Naive thymus-derived CD4-positive, alpha-beta T cell (primary cell): ENCODE measurements at regions of chr18 and their contacts with region 1.

Region 1: DNA sequence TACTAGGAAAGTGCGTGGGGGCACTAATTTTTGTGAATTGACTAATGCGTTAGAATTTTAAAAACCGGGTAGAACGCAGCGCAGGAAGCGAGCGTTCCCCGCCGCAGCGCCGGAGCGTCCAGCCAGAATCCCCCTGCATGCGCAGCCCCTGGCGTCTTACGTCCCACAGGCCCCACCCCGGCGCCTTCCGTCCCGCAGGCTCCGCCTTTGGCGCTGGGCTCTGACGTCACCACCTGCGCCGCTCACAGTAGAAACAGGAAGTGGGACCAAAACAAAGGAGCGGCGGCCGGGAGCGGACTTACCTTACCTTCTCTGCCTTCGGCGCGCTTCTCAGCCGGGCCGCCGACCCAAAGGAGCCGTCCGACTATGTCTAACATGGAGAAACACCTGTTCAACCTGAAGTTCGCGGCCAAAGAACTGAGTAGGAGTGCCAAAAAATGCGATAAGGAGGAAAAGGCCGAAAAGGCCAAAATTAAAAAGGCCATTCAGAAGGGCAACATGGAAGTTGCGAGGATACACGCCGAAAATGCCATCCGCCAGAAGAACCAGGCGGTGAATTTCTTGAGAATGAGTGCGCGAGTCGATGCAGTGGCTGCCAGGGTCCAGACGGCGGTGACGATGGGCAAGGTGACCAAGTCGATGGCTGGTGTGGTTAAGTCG is at the start of gene CHMP1B:
- DNase-seq: peak; percentile 95 to 97 (median 97)
- ATAC-seq: peak; percentile 91
- H3K4me3 ChIP-seq: peak within 1 kb of the TSS; percentile 88
- H3K4me3 Mint-ChIP-seq: peak within 1 kb of the TSS; percentile 89 to 100 (median 100)
- H3K27ac ChIP-seq: peak within 1 kb of the TSS; percentile 96
- H3K27ac Mint-ChIP-seq: peak within 1 kb of the TSS; percentile 97 to 100 (median 100)
- H3K4me1 ChIP-seq: peaks cover 19 to 21% of the 10 kb centered on the region in 2 donors
- H3K4me1 Mint-ChIP-seq: peaks cover 16 to 62% (median 50%) of the 10 kb centered on the region in 7 donors
- H3K27me3 ChIP-seq: no peaks in the 10 kb centered on the region
- H3K27me3 Mint-ChIP-seq: peaks cover 0 to 13% (median 0%) of the 10 kb centered on the region in 5 donors
- total RNA-seq, gene CHMP1B: 27.2 to 115 (median 56.1) TPM

Region 2: DNA sequence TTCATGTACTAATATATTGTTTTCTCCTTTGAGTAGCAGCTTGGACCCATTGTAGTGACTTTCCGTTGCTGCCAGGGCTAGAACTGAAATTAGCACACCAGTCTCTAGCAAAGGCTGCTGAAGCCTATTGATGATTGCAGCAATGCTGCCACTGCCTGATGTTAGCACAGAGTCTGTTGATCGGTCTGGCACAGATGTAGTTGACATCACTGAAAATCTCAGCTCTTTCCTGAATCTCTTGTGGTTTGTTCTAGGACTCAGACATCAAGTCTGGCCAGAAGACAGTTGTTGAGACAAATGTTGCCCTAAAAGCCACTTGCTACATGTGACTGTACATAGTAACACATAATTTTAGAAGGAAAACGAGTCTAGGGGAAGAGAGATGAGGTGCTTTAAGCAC is 1890.2 kb before region 1 on chr18:
- CTCF ChIA-PET with region 1: no interaction called
- POLR2A ChIA-PET with region 1: no interaction called
- intact Hi-C with region 1: no loop called
- DNase-seq: no peak
- ATAC-seq: peak; percentile 34
- H3K4me3 ChIP-seq: no peak overlapping the region
- H3K4me3 Mint-ChIP-seq: peak overlapping the region in 1 of 10 donors; percentile 14
- H3K27ac ChIP-seq: no peak overlapping the region
- H3K27ac Mint-ChIP-seq: peak overlapping the region in 4 of 9 donors; percentile 2 to 67 (median 42)
- H3K4me1 ChIP-seq: no peaks in the 10 kb centered on the region
- H3K4me1 Mint-ChIP-seq: peaks cover 3 to 39% (median 27%) of the 10 kb centered on the region in 7 donors
- H3K27me3 ChIP-seq: no peaks in the 10 kb centered on the region
- H3K27me3 Mint-ChIP-seq: peaks cover 0 to 10% (median 0%) of the 10 kb centered on the region in 5 donors

Region 3: DNA sequence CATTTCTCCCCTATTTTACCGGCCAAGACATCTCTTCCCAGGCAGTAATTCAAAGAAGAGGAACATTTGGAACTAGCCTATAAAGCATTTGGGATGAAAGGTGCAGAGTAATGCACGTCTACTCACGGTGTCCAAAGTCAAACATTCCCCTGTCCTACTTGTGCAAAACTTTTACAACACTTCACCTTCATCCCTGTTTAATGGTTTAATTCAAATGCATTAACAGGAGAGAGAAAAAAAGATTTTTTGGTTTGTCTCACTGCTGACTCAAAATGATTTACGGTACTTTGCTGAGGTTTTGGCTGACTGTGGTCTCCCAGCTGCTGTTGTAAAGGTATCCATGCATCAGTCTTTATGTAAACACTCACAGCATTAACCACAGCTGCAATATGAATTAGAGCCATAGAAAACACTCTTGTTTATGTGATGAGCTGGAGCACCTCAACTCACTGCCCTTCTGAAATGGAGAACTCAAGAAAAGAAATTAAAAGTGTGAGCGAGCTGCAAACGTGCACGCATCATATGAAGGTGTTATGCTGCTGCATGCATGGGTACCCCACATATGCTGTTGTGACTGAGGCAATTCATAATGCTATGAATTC is 922.4 kb before region 1 on chr18:
- CTCF ChIA-PET with region 1: no interaction called
- POLR2A ChIA-PET with region 1: no interaction called
- intact Hi-C with region 1: no loop called
- DNase-seq: no peak
- ATAC-seq: no peak
- H3K4me3 ChIP-seq: no peak overlapping the region
- H3K4me3 Mint-ChIP-seq: no peak overlapping the region
- H3K27ac ChIP-seq: no peak overlapping the region
- H3K27ac Mint-ChIP-seq: no peak overlapping the region
- H3K4me1 ChIP-seq: no peaks in the 10 kb centered on the region
- H3K4me1 Mint-ChIP-seq: no peaks in the 10 kb centered on the region
- H3K27me3 ChIP-seq: no peaks in the 10 kb centered on the region
- H3K27me3 Mint-ChIP-seq: peaks cover 0 to 18% (median 0%) of the 10 kb centered on the region in 5 donors

Region 4: DNA sequence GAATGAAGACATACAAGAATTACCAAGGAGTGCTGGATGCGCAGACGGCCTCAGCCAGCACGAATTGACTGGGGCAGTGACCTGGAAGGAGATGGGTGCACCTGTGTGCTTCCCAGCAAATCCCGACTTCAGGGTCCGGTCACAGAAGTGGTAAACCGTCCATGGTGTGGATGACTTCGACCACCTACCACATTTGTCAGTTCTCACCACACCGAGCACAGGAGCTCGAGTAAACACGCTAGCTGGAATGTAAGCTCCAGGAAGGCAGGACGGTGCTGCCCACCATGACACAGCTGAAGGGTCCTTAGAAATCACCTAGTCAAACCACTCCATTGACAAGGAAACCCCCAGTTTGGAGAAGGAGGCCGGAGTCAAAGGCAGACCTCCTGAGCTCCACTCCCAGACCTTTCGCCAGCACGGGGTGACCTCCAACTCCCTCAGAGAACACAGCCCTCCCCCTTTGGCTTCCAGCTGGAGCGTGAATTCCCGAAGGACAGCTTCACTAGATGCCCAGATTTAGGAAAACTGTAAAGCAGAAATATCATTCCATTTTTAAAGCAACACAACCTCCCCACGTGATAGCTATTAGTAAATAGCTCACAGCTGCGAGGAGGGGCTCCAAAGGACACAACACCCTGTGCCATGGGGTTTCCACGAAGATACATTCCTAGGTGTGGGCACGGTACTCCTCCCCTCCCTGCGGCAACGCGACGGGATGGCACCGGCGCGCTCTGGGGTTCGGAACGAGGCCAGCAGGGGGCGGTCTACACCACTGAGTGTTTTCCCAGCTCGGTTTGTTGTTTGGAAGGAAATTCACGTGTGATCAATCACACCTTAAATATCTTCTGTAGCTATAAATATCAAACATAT is 196.3 kb before region 1 on chr18:
- CTCF ChIA-PET with region 1: no interaction called
- POLR2A ChIA-PET with region 1: no interaction called
- intact Hi-C with region 1: no loop called
- DNase-seq: peak in 4 of 9 donors; percentile 8 to 55 (median 16)
- ATAC-seq: peak; percentile 34
- H3K4me3 ChIP-seq: no peak overlapping the region
- H3K4me3 Mint-ChIP-seq: peak overlapping the region in 2 of 10 donors; percentile 11 to 12
- H3K27ac ChIP-seq: no peak overlapping the region
- H3K27ac Mint-ChIP-seq: no peak overlapping the region
- H3K4me1 ChIP-seq: no peaks in the 10 kb centered on the region
- H3K4me1 Mint-ChIP-seq: peaks cover 0 to 6% (median 0%) of the 10 kb centered on the region in 7 donors
- H3K27me3 ChIP-seq: no peaks in the 10 kb centered on the region
- H3K27me3 Mint-ChIP-seq: peaks cover 33 to 63% (median 46%) of the 10 kb centered on the region in 5 donors

Region 5: DNA sequence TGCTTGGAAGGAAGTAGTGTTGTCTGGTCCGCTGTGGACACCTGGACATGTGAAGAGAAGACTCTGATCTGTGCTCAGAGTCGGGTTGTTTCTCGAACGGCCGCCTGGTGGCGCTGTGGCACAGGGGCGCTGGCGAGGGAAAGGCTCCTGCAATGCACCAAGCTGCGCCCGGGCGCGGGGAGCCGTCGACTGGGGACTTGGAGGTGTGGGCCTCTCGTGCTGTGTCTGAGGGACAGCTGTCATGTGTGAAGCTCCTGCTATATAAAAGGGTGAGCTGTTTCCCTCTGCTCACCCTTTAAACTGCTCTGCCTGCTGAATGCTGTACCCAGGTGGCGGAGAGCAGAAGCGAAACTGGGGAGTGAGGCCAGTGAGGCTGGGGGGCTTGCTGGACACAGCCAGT is 118.2 kb before region 1 on chr18:
- CTCF ChIA-PET with region 1: no interaction called
- POLR2A ChIA-PET with region 1: interaction called, 3 read pairs
- intact Hi-C with region 1: loop called in 1 of 2 experiments (anchors 5 kb)
- DNase-seq: peak; percentile 18 to 74 (median 49)
- ATAC-seq: peak; percentile 79
- H3K4me3 ChIP-seq: no peak overlapping the region
- H3K4me3 Mint-ChIP-seq: peak overlapping the region in 4 of 10 donors; percentile 14 to 37 (median 26)
- H3K27ac ChIP-seq: no peak overlapping the region
- H3K27ac Mint-ChIP-seq: no peak overlapping the region
- H3K4me1 ChIP-seq: no peaks in the 10 kb centered on the region
- H3K4me1 Mint-ChIP-seq: peaks cover 0 to 5% (median 0%) of the 10 kb centered on the region in 7 donors
- H3K27me3 ChIP-seq: peaks cover 0 to 5% of the 10 kb centered on the region in 2 donors
- H3K27me3 Mint-ChIP-seq: peaks cover 26 to 54% (median 31%) of the 10 kb centered on the region in 5 donors

Region 6: GRCh38 chr18:11908182-11909060 is 57.1 kb after region 1 on chr18 and contains the start of gene MPPE1:
- CTCF ChIA-PET with region 1: no interaction called
- POLR2A ChIA-PET with region 1: interaction called, 36 read pairs
- intact Hi-C with region 1: loop called (anchors 1 kb)
- DNase-seq: peak; percentile 77 to 88 (median 83)
- ATAC-seq: peak; percentile 95
- H3K4me3 ChIP-seq: peak within 1 kb of the TSS; percentile 94
- H3K4me3 Mint-ChIP-seq: peak within 1 kb of the TSS; percentile 90 to 97 (median 96)
- H3K27ac ChIP-seq: peak within 1 kb of the TSS; percentile 97
- H3K27ac Mint-ChIP-seq: peak within 1 kb of the TSS; percentile 93 to 97 (median 95)
- H3K4me1 ChIP-seq: peaks cover 8 to 9% of the 10 kb centered on the region in 2 donors
- H3K4me1 Mint-ChIP-seq: peaks cover 10 to 32% (median 24%) of the 10 kb centered on the region in 7 donors
- H3K27me3 ChIP-seq: no peaks in the 10 kb centered on the region
- H3K27me3 Mint-ChIP-seq: no peaks in the 10 kb centered on the region
- total RNA-seq, gene MPPE1: 61.9 to 88.0 (median 86.2) TPM

Region 7: GRCh38 chr18:12376718-12377555 is 525.7 kb after region 1 on chr18 and contains the start of gene AFG3L2:
- CTCF ChIA-PET with region 1: no interaction called
- POLR2A ChIA-PET with region 1: interaction called, 4 read pairs
- intact Hi-C with region 1: loop called (anchors 1 to 2 kb)
- DNase-seq: peak; percentile 99 to 100 (median 100)
- ATAC-seq: peak; percentile 93
- H3K4me3 ChIP-seq: peak within 1 kb of the TSS; percentile 93
- H3K4me3 Mint-ChIP-seq: peak within 1 kb of the TSS; percentile 85 to 93 (median 92)
- H3K27ac ChIP-seq: peak within 1 kb of the TSS; percentile 97
- H3K27ac Mint-ChIP-seq: peak within 1 kb of the TSS; percentile 77 to 95 (median 90)
- H3K4me1 ChIP-seq: peaks cover 13 to 28% of the 10 kb centered on the region in 2 donors
- H3K4me1 Mint-ChIP-seq: peaks cover 32 to 52% (median 46%) of the 10 kb centered on the region in 7 donors
- H3K27me3 ChIP-seq: no peaks in the 10 kb centered on the region
- H3K27me3 Mint-ChIP-seq: peaks cover 0 to 22% (median 0%) of the 10 kb centered on the region in 5 donors
- total RNA-seq, gene AFG3L2: 26.3 to 42.3 (median 32.0) TPM

Region 8: GRCh38 chr18:12990967-12991838 is 1139.9 kb after region 1 on chr18 and contains the start of gene CEP192:
- CTCF ChIA-PET with region 1: no interaction called
- POLR2A ChIA-PET with region 1: no interaction called
- intact Hi-C with region 1: loop called in 1 of 2 experiments (anchors 1 kb)
- DNase-seq: peak; percentile 90 to 99 (median 97)
- ATAC-seq: peak; percentile 99
- H3K4me3 ChIP-seq: peak within 1 kb of the TSS; percentile 85
- H3K4me3 Mint-ChIP-seq: peak within 1 kb of the TSS in 9 of 10 donors; percentile 90 to 99 (median 98)
- H3K27ac ChIP-seq: peak within 1 kb of the TSS; percentile 82
- H3K27ac Mint-ChIP-seq: peak within 1 kb of the TSS; percentile 88 to 97 (median 93)
- H3K4me1 ChIP-seq: peaks cover 27 to 29% of the 10 kb centered on the region in 2 donors
- H3K4me1 Mint-ChIP-seq: peaks cover 10 to 29% (median 20%) of the 10 kb centered on the region in 7 donors
- H3K27me3 ChIP-seq: no peaks in the 10 kb centered on the region
- H3K27me3 Mint-ChIP-seq: peaks cover 0 to 1% (median 0%) of the 10 kb centered on the region in 5 donors
- total RNA-seq, gene CEP192: 30.9 to 45.0 (median 39.7) TPM